Activated T-helper 1 cell treated with anti-CD3 and anti-CD28 coated beads, Interleukin-12 subunit alpha, Interleukin-12 subunit beta, Interleukin-2, Interleukin-4 antibody, amounts not matched to agents 30 ng/mL and 10 ng/mL and 1 ng/mL, durations not matched to agents 14 hours and 24 hours and 36 hours (primary cell): ENCODE measurements at regions of chrX and their contacts with region 1.

Region 1: GRCh38 chrX:101287402-101287801 is 3.7 kb downstream of the TAF7L start:
- DNase-seq: no peak
- H3K4me3 Mint-ChIP-seq: no peak overlapping the region
- H3K27ac Mint-ChIP-seq: no peak overlapping the region
- H3K4me1 Mint-ChIP-seq: no peaks in the 10 kb centered on the region
- H3K27me3 Mint-ChIP-seq: peaks cover 10% of the 10 kb centered on the region

Region 2: DNA sequence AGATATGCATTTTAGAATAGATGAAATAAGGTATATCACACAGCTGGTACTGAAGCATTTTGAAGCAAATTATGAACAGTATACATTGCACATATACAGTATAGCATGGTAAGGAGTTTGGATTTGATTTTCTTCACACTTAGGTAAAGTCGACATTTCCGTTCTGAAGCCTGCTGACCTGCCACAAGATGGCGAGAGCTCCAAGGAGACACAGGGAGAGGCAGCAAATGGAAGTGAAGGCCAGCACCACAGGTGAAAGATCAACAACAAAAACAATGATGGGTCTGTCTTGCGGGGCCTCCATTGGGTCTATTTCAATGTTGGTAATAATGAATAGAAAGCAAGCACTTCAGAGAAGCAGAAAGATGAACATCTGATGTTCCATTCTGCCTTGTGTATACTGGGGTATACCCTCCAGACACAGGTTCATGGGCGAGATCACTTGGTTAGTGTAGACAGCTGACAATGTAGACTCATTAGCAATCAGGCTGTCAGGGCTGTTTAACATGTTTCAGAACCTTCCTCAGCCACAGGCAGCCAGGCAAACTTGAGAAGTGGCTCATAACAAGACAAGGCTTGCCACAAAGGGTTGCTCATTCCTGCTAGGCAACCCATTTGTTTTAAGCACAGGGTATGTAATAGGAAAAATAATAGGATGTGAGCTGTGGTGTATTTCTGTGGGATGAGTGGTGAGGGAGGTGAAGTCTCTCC is 391.9 kb before region 1 on chrX:
- intact Hi-C with region 1: loop called (anchors 1 kb)
- DNase-seq: no peak
- H3K4me3 Mint-ChIP-seq: no peak overlapping the region
- H3K27ac Mint-ChIP-seq: no peak overlapping the region
- H3K4me1 Mint-ChIP-seq: no peaks in the 10 kb centered on the region
- H3K27me3 Mint-ChIP-seq: no peaks in the 10 kb centered on the region

Region 3: GRCh38 chrX:101040197-101040596 is 247.2 kb before region 1 on chrX:
- intact Hi-C with region 1: loop called (anchors 10 kb)
- DNase-seq: no peak
- H3K4me3 Mint-ChIP-seq: no peak overlapping the region
- H3K27ac Mint-ChIP-seq: no peak overlapping the region
- H3K4me1 Mint-ChIP-seq: no peaks in the 10 kb centered on the region
- H3K27me3 Mint-ChIP-seq: no peaks in the 10 kb centered on the region

Region 4: DNA sequence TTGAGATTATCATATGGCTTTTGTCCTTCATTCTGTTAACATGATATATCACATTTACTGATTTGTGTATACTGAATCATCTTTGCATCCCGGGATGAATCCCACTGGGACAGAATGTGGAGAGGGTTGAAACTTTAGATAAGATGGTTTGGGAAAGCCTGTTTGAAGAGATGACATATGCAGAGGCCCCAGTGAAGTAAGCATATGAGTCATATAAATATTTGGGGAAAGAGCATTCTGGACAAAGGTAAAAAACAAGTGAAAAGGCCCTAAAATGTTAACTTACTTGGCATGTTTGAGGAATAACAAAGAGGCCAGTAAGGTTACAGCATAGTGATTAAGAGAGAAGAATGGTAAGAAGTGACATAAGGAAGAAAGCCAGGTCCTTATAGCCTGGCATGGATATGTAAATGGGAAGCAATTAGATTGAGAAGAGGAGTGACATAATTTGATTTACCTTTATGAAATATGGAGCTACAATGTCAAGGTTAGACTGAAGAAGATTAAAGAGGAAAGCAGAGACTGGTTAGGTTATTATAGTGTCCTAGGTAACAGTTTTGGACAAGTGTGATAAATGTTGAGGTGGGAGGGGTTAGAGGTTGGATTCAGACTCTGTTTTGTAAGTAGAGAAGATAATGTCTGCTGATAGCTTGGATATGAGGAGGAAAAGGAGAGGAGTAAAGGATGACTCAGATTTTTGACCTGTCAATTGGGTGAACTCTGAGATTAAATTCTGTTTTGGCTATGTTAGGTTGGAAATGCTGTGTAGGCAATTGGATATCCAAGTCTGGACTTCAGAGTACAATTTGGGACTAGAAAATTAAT is 122.4 kb before region 1 on chrX:
- intact Hi-C with region 1: loop called (anchors 5 kb)
- DNase-seq: no peak
- H3K4me3 Mint-ChIP-seq: no peak overlapping the region
- H3K27ac Mint-ChIP-seq: no peak overlapping the region
- H3K4me1 Mint-ChIP-seq: no peaks in the 10 kb centered on the region
- H3K27me3 Mint-ChIP-seq: no peaks in the 10 kb centered on the region